GM18951 (cell line): ENCODE measurements at regions of chr12 and their contacts with region 1.

Region 1: GRCh38 chr12:13937735-13938134 is 43.7 kb downstream of the GRIN2B start:
- POLR2A ChIP-seq: no peak

Region 2: GRCh38 chr12:13702381-13702780 is 235.4 kb before region 1 on chr12:
- in situ Hi-C with region 1: no loop called
- POLR2A ChIP-seq: no peak

Region 3: GRCh38 chr12:13745111-13745685 is 192.5 kb before region 1 on chr12:
- in situ Hi-C with region 1: loop called (anchors 10 kb)
- POLR2A ChIP-seq: no peak

Region 4: DNA sequence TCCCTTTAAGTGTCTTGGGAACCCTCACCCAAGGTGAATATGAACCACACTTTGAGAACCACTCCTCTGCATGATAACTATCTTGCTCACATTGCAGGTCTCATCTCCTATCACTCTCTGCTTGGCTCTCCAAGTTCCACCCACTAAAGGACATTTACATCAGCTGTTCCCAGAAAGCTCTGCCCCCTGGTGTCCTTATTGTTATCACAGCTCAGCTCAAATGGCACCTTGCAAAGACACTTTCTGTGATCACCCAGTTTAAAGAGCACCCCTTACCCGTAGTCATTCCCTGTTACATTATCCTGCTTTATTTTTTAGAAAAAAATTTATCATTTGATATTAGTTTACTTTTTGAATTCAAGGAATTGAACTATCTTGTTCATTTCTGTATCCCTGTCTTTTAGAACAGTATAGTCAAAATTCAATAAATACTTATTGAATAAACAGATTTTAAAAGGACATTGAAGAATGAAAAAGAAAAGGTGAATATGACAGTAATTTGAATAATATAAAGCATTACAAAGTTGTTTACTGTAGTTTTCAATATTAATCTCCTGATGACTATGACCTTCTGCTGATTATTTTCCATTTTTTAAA is 779.2 kb after region 1 on chr12:
- in situ Hi-C with region 1: no loop called
- POLR2A ChIP-seq: no peak